Kidney (tissue), 22 donors: ENCODE measurements at regions of chr15 and their contacts with region 1.

Region 1: DNA sequence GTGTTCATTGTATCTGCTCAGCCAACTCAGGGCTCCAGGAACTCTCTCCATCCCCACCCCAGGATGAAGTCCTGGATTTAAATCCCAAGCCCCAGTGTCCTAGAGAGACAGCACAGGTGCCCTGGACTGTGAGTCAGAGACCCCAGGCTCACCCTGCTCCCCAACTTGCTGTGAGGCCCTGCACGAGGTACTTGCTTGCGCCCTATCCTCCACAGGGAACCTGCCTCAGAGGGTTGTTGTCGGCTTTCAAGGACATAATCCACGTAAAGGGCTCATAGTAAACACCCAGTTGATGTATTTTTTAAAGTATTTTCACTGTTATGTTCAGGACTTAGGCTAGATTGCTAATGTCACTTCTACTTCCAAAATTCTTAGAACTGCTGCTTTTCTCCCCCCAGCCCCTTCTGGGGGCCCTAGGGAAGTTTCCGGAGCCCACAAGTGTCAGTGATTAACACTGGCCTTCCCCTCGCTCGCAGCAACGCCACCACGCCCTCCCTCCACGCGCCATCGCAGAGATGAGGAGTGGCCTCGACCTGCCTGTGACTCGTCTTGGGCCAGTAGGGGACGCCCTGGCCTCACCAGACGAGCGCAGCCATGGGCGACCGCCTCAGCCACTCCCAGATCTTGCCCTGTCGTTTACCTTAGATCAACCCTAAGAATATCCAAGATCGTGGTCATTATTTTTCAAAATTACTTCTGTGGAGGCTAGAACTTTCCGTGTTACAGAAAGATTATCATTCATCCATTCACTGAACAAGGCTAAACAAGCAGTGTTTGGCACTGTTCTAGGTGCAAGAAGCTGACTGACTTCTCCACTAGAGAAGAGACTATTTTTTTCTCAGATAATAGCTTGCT is 6.0 kb upstream of the SRP14 start:
- DNase-seq: peak; percentile 87 to 95 (median 89)
- H3K4me3 ChIP-seq: peak overlapping the region in 1 of 3 donors; percentile 21
- H3K27ac ChIP-seq: no peak overlapping the region
- H3K4me1 ChIP-seq: peaks cover 3 to 28% (median 10%) of the 10 kb centered on the region in 3 donors
- H3K27me3 ChIP-seq: no peaks in the 10 kb centered on the region
- CTCF ChIP-seq: peak; percentile 99

Region 2: GRCh38 chr15:38461066-38461833 is 1583.7 kb before region 1 on chr15:
- intact Hi-C with region 1: no loop called
- DNase-seq: no peak
- H3K4me3 ChIP-seq: no peak overlapping the region
- H3K27ac ChIP-seq: no peak overlapping the region
- H3K4me1 ChIP-seq: no peaks in the 10 kb centered on the region
- H3K27me3 ChIP-seq: no peaks in the 10 kb centered on the region
- CTCF ChIP-seq: no peak

Region 3: GRCh38 chr15:39273717-39274411 is 771.1 kb before region 1 on chr15:
- intact Hi-C with region 1: no loop called
- DNase-seq: peak in 1 of 5 donors; percentile 34
- H3K4me3 ChIP-seq: no peak overlapping the region
- H3K27ac ChIP-seq: no peak overlapping the region
- H3K4me1 ChIP-seq: no peaks in the 10 kb centered on the region
- H3K27me3 ChIP-seq: no peaks in the 10 kb centered on the region
- CTCF ChIP-seq: no peak

Region 4: GRCh38 chr15:39976291-39977274 is 68.4 kb before region 1 on chr15:
- intact Hi-C with region 1: no loop called
- DNase-seq: peak; percentile 82 to 88 (median 86)
- H3K4me3 ChIP-seq: peak overlapping the region; percentile 57 to 62 (median 58)
- H3K27ac ChIP-seq: peak overlapping the region; percentile 5 to 59
- H3K4me1 ChIP-seq: no peaks in the 10 kb centered on the region
- H3K27me3 ChIP-seq: no peaks in the 10 kb centered on the region
- CTCF ChIP-seq: peak; percentile 52

Region 5: DNA sequence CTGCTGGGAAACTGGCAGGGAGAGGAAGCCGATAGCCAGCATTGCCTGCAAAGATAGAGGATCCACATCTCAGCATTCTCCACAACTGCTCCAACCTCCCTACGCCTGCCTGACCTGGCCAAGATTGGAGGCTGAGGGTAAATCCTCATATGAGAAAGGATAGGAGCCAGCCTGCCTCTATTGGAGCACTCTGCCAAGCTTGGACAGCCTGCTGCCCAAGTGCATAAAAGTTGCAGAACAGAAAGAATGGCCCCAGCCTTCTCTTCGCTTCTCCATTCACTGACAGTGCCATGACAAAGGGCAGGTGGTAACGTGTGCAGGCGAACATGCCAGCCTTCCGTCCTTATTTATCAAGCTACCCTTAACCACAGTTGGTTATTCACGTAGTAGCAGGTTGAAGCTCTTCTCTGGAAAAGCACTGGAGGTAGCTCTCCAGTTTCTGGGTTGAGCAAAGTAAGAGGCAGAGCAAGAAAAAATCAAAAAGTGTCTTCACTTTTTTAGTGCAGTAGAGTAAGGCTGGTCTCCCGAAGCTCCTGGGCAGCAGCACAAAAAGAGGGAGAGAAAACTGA is 59.4 kb after region 1 on chr15:
- intact Hi-C with region 1: no loop called
- DNase-seq: peak in 1 of 5 donors; percentile 46
- H3K4me3 ChIP-seq: no peak overlapping the region
- H3K27ac ChIP-seq: peak overlapping the region in 1 of 2 donors; percentile 20
- H3K4me1 ChIP-seq: peaks cover 11 to 68% (median 51%) of the 10 kb centered on the region in 3 donors
- H3K27me3 ChIP-seq: no peaks in the 10 kb centered on the region
- CTCF ChIP-seq: no peak

Region 6: DNA sequence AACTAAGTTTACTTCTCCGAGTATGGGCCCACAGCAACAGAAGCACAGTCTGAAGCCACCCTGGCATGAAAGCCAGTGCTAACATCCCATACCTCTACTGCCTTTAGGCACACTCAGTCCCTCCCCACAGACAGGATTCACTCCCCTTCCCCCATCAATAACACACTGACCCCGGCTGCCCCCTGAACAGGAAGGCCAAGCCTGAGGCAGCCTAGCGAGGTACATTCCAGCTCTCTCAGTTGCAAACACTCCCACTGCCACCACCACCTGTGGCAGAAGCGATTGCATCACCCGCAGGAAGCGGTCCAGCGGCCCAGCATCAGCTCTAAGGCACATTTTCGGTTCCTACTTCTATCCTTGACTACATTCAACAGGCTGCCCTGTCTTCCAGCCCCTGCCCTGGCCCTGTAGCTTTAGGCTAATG is 70.7 kb after region 1 on chr15:
- intact Hi-C with region 1: loop called (anchors 10 kb)
- DNase-seq: peak; percentile 87 to 91 (median 89)
- H3K4me3 ChIP-seq: no peak overlapping the region
- H3K27ac ChIP-seq: no peak overlapping the region
- H3K4me1 ChIP-seq: peaks cover 0 to 2% (median 0%) of the 10 kb centered on the region in 3 donors
- H3K27me3 ChIP-seq: no peaks in the 10 kb centered on the region
- CTCF ChIP-seq: no peak